SK-N-SH (cell line): ENCODE measurements at regions of chr14 and their contacts with region 1.

Region 1: GRCh38 chr14:35374273-35374681 is 30.3 kb downstream of the NFKBIA start:
- DNase-seq: no peak
- H3K4me3 ChIP-seq: no peak overlapping the region
- H3K27ac ChIP-seq: no peak overlapping the region
- H3K4me1 ChIP-seq: peaks cover 0 to 4% of the 10 kb centered on the region in 2 experiments; a peak in 1 of 4 replicates
- H3K27me3 ChIP-seq: no peaks in the 10 kb centered on the region
- CTCF ChIP-seq: no peak
- EP300 ChIP-seq: no peak
- RAD21 ChIP-seq: no peak

Region 2: GRCh38 chr14:35385042-35385839 is 11.0 kb after region 1 on chr14:
- CTCF ChIA-PET with region 1: no interaction called
- POLR2A ChIA-PET with region 1: interaction called, 10 read pairs
- DNase-seq: peak; percentile 67
- H3K4me3 ChIP-seq: no peak overlapping the region
- H3K27ac ChIP-seq: peak overlapping the region; percentile 79 to 80
- H3K4me1 ChIP-seq: peaks cover 15 to 31% of the 10 kb centered on the region in 2 experiments; a peak in 3 of 4 replicates
- H3K27me3 ChIP-seq: no peaks in the 10 kb centered on the region
- CTCF ChIP-seq: no peak
- EP300 ChIP-seq: no peak
- RAD21 ChIP-seq: no peak